PC-3 (cell line): ENCODE measurements at regions of chr5 and their contacts with region 1.

Region 1: GRCh38 chr5:88690409-88691229 is 192.4 kb downstream of the MEF2C start:
- DNase-seq: peak; percentile 66
- ATAC-seq: peak; percentile 75
- H3K4me3 ChIP-seq: peak overlapping the region; percentile 70
- H3K27ac ChIP-seq: no peak overlapping the region
- H3K4me1 ChIP-seq: peaks cover 16% of the 10 kb centered on the region; the same call in 1 of the 2 replicates
- H3K27me3 ChIP-seq: peaks cover 41% of the 10 kb centered on the region
- CTCF ChIP-seq: peak; percentile 97

Region 2: GRCh38 chr5:87421307-87421706 is 1269.3 kb before region 1 on chr5:
- CTCF ChIA-PET with region 1: no interaction called
- POLR2A ChIA-PET with region 1: no interaction called
- intact Hi-C with region 1: loop called (anchors 10 kb)
- DNase-seq: no peak
- ATAC-seq: no peak
- H3K4me3 ChIP-seq: no peak overlapping the region
- H3K27ac ChIP-seq: no peak overlapping the region
- H3K4me1 ChIP-seq: peaks cover 16% of the 10 kb centered on the region
- H3K27me3 ChIP-seq: no peaks in the 10 kb centered on the region
- CTCF ChIP-seq: no peak

Region 3: DNA sequence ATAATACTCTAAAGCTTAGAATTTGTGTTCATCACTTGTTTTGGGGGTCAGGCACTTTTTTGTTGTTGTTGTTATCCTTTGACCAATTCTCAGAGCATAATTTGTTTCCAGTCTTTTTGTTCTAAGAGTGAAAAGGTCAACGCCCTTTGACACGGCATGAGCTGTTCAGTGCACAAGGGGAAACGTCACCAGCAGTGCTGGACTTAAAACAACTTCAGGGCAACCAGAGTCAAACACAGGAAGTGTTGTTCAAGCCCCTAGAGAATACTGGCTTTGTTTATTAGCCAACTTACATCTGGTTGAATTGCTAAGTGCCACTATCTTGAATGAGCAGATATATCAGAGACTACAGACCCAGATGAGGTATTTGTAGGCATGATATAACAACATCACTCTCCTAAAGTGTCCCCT is 790.9 kb before region 1 on chr5:
- CTCF ChIA-PET with region 1: no interaction called
- POLR2A ChIA-PET with region 1: no interaction called
- intact Hi-C with region 1: loop called (anchors 10 kb)
- DNase-seq: no peak
- ATAC-seq: no peak
- H3K4me3 ChIP-seq: no peak overlapping the region
- H3K27ac ChIP-seq: no peak overlapping the region
- H3K4me1 ChIP-seq: peaks cover 7% of the 10 kb centered on the region; the same call in 1 of the 2 replicates
- H3K27me3 ChIP-seq: no peaks in the 10 kb centered on the region
- CTCF ChIP-seq: no peak

Region 4: DNA sequence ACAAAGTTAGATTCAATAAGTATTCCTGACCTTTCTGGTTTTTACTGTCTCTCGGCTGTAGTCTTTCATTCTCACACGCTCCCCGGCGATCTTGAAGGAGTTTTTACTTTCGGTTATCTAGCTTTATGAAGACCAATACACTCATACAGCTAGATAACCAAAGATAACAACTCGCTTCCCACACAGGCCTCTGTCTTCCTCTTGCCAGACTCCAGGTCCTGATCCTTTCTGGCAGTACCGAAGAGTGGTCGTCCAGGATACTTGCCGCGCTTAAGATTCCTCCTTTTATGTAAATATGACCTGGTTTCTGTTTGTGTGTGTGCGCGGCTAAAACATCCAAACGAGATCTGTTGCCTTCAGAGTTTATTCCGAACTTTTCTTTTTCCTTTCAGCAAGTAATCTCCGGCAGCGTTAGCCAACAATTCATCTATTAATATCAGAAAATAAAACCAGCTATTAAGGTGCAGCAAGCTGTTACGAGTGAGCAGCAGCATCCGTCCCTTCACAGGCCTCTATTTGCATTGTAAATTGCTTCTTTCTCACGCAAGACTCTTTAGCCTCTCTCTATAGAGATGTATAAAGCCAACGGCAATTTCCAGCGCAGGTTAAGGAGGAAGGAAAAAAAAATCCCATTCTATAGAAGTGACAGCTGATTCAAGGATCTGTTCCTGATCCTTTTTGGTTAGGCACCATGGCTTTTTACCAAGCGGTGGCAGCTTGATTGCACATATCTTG is 23.7 kb before region 1 on chr5:
- CTCF ChIA-PET with region 1: interaction called, 10 read pairs
- POLR2A ChIA-PET with region 1: no interaction called
- intact Hi-C with region 1: no loop called
- DNase-seq: peak; percentile 11
- ATAC-seq: peak; percentile 74
- H3K4me3 ChIP-seq: peak overlapping the region; percentile 74
- H3K27ac ChIP-seq: no peak overlapping the region
- H3K4me1 ChIP-seq: 0 out of 2 replicates have a peak, but pooled peaks cover under 1% of the 10 kb centered on the region
- H3K27me3 ChIP-seq: no peaks in the 10 kb centered on the region
- CTCF ChIP-seq: no peak

Region 5: GRCh38 chr5:88724201-88724600 is 33.6 kb after region 1 on chr5:
- CTCF ChIA-PET with region 1: interaction called, 13 read pairs
- POLR2A ChIA-PET with region 1: no interaction called
- intact Hi-C with region 1: loop called (anchors 1 kb)
- DNase-seq: peak; percentile 68
- ATAC-seq: peak; percentile 34
- H3K4me3 ChIP-seq: no peak overlapping the region
- H3K27ac ChIP-seq: no peak overlapping the region
- H3K4me1 ChIP-seq: peaks cover 8% of the 10 kb centered on the region
- H3K27me3 ChIP-seq: no peaks in the 10 kb centered on the region
- CTCF ChIP-seq: peak; percentile 75

Region 6: GRCh38 chr5:88734191-88734640 is 43.6 kb after region 1 on chr5:
- CTCF ChIA-PET with region 1: no interaction called
- POLR2A ChIA-PET with region 1: no interaction called
- intact Hi-C with region 1: no loop called
- DNase-seq: no peak
- ATAC-seq: no peak
- H3K4me3 ChIP-seq: no peak overlapping the region
- H3K27ac ChIP-seq: no peak overlapping the region
- H3K4me1 ChIP-seq: 0 out of 2 replicates have a peak, but pooled peaks cover 9% of the 10 kb centered on the region
- H3K27me3 ChIP-seq: no peaks in the 10 kb centered on the region
- CTCF ChIP-seq: no peak